Gastrocnemius medialis (tissue), 4 donors: ENCODE measurements at regions of chr12 and their contacts with region 1.

Region 1: DNA sequence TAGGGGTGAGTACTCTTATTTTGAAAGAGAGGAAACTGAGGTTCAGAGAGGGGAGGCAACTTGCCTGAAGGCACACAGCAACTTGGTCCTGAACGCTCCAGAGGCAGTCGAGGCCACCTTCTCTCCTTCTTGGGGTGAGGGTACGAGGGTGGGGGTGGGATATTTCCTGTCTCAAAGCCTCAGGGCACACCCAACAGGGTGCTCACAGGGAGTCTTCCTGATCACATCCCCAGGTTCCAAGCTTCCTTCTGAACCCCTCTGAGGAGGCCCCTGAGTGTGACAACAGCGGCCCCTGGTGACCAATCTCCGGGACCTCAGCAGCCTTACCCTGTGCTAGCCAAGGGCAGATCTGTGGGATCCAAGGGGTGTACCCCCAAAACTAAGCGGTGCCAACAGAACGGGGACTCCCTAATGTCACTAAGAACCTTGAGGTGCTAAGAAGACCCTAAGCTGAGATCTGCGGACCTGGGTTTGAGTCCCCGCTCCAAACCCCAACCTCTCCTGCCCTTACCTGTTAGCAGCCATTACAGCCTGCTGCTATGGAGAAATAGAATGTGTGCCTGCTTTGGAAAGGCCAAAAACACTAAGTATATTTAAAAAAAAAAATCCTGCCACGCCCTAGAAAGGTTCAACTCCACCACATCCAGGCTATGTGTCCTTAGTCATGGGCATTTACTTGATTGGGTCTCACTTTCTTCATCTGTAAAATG is 57.9 kb downstream of the TRPV4 start:
- DNase-seq: peak; percentile 28 to 60
- ATAC-seq: peak; percentile 69 to 79
- H3K4me3 ChIP-seq: no peak overlapping the region
- H3K27ac ChIP-seq: no peak overlapping the region
- H3K4me1 ChIP-seq: peaks cover 7 to 12% of the 10 kb centered on the region in 2 donors
- H3K27me3 ChIP-seq: no peaks in the 10 kb centered on the region
- CTCF ChIP-seq: peak; percentile 85 to 94 (median 89)
- POLR2A ChIP-seq: no peak

Region 2: DNA sequence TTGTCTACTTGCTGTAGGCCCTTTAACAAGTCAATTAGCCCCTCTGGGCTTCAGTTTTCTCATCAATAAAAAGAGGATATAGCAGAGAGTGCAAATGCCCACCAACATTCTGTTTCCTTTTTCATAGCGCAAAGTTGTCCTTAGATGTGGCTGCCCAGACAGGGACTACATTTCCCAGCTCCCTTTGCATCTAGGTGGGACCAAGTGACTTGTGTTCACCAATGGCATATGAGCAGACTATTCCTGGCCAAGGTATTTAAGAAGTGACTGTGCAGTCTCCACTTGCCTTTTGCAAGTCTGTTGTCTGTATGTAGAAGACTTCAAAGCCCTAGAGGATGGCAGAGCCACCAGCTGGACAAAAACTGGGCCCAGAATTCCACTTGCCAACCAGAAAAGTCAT is 835.7 kb before region 1 on chr12:
- in situ Hi-C with region 1: no loop called
- intact Hi-C with region 1: no loop called
- DNase-seq: peak; percentile 2 to 25
- ATAC-seq: peak; percentile 92 to 98
- H3K4me3 ChIP-seq: no peak overlapping the region
- H3K27ac ChIP-seq: peak overlapping the region in 1 of 4 donors; percentile 42
- H3K4me1 ChIP-seq: peaks cover 0 to 5% of the 10 kb centered on the region in 2 donors
- H3K27me3 ChIP-seq: no peaks in the 10 kb centered on the region
- CTCF ChIP-seq: no peak
- POLR2A ChIP-seq: no peak

Region 3: GRCh38 chr12:109428037-109428629 is 347.2 kb before region 1 on chr12:
- in situ Hi-C with region 1: no loop called
- intact Hi-C with region 1: loop called (anchors 10 kb)
- DNase-seq: peak; percentile 33 to 66
- ATAC-seq: peak; percentile 87 to 93
- H3K4me3 ChIP-seq: no peak overlapping the region
- H3K27ac ChIP-seq: no peak overlapping the region
- H3K4me1 ChIP-seq: peaks cover 0 to 8% of the 10 kb centered on the region in 2 donors
- H3K27me3 ChIP-seq: no peaks in the 10 kb centered on the region
- CTCF ChIP-seq: peak; percentile 70 to 97 (median 80)
- POLR2A ChIP-seq: no peak

Region 4: DNA sequence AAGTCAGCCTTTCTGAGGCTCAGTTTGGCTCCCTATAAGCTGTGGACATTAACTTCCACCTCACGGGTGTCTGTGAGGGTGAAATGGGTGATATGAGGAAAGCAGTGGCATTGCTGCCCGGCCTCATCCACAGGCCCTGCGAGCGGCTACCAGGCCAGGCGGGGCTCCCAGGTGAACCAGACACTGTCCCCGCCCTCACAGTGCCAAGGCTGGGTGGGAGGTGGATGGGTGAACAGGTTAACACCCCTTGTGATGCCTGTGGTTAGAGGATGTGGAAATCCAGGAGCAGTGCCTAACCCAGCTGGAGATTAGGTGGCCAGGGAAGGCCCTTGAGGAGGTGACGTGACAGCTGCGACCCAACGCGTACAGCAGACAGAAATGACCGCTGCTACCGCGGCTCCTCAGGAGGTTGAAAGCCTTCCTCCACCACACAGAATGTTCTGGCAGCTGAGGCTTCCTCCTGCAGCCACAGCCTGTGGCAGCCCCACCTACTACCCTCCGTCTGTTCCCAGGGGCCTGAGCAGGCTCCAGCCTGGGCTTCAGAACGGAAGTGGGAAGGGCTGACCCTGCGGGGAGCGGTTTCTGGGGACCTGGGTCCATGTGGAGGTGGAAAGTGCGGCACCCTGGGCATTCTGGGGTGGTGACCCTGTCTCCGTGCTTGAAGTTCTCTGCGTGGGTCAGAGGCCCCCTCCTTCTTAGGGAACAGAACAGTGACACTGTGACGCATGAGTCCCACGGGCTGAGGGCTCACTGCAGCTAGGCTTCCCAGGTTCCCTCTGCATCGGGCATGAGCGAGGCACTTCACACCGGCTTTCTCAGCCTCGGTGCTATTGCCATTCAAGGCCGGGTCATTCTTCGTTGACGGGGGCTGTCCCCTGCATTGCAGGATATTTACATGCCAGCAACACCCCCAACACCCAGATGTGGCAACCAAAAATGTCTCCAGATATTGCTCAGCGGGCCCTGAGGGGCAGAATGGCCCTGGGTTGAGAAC is 211.7 kb before region 1 on chr12:
- in situ Hi-C with region 1: no loop called
- intact Hi-C with region 1: no loop called
- DNase-seq: no peak
- ATAC-seq: no peak
- H3K4me3 ChIP-seq: no peak overlapping the region
- H3K27ac ChIP-seq: peak overlapping the region in 1 of 4 donors; percentile 39
- H3K4me1 ChIP-seq: no peaks in the 10 kb centered on the region
- H3K27me3 ChIP-seq: no peaks in the 10 kb centered on the region
- CTCF ChIP-seq: no peak
- POLR2A ChIP-seq: no peak

Region 5: GRCh38 chr12:109592905-109593272 is 182.4 kb before region 1 on chr12:
- in situ Hi-C with region 1: loop called in 2 of 4 experiments (anchors 5 kb)
- intact Hi-C with region 1: loop called (anchors 1 kb)
- DNase-seq: peak; percentile 64 to 78
- ATAC-seq: peak; percentile 80 to 91
- H3K4me3 ChIP-seq: no peak overlapping the region
- H3K27ac ChIP-seq: peak overlapping the region; percentile 77 to 81 (median 80)
- H3K4me1 ChIP-seq: peaks cover 26 to 31% of the 10 kb centered on the region in 2 donors
- H3K27me3 ChIP-seq: no peaks in the 10 kb centered on the region
- CTCF ChIP-seq: no peak
- POLR2A ChIP-seq: no peak

Region 6: GRCh38 chr12:109597795-109598427 is 177.4 kb before region 1 on chr12:
- in situ Hi-C with region 1: loop called (anchors 5 kb)
- intact Hi-C with region 1: loop called (anchors 1 kb)
- DNase-seq: peak; percentile 76 to 81
- ATAC-seq: peak; percentile 53 to 60
- H3K4me3 ChIP-seq: no peak overlapping the region
- H3K27ac ChIP-seq: peak overlapping the region; percentile 8 to 61 (median 45)
- H3K4me1 ChIP-seq: peaks cover 22 to 31% of the 10 kb centered on the region in 2 donors
- H3K27me3 ChIP-seq: no peaks in the 10 kb centered on the region
- CTCF ChIP-seq: peak; percentile 94 to 98 (median 95)
- POLR2A ChIP-seq: no peak

Region 7: DNA sequence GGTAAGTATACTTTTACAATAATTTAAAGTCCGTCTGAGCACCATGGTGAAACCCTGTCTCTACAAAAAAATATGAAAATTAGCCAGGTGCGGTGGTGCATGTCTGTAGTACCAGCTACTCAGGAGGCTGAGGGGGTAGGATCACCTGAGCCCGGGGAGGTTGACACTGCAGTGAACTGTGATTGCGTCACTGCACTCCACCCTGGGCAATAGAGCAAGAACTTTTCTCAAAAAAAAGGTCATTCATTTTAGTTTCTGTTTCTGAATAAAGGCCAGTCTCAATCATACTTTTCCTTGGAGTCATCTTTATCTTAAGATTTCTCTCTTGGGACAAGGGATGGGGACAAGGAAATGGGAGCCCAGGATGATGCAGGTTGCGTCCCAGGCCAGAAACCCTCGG is 236.8 kb after region 1 on chr12:
- in situ Hi-C with region 1: no loop called
- intact Hi-C with region 1: no loop called
- DNase-seq: no peak
- ATAC-seq: no peak
- H3K4me3 ChIP-seq: no peak overlapping the region
- H3K27ac ChIP-seq: no peak overlapping the region
- H3K4me1 ChIP-seq: no peaks in the 10 kb centered on the region
- H3K27me3 ChIP-seq: no peaks in the 10 kb centered on the region
- CTCF ChIP-seq: no peak
- POLR2A ChIP-seq: no peak

Region 8: GRCh38 chr12:110531741-110532333 is 756.5 kb after region 1 on chr12:
- in situ Hi-C with region 1: no loop called
- intact Hi-C with region 1: no loop called
- DNase-seq: no peak
- ATAC-seq: no peak
- H3K4me3 ChIP-seq: no peak overlapping the region
- H3K27ac ChIP-seq: peak overlapping the region in 3 of 4 donors; percentile 43 to 95 (median 89)
- H3K4me1 ChIP-seq: peaks cover 49 to 51% of the 10 kb centered on the region in 2 donors
- H3K27me3 ChIP-seq: no peaks in the 10 kb centered on the region
- CTCF ChIP-seq: no peak
- POLR2A ChIP-seq: no peak